ENCODE measurements at regions of chr9 and their contacts with region 1.

Region 1: GRCh38 chr9:97921959-97922724 is at the start of gene TRMO:
- DNase-seq: peak; percentile 93
- H3K4me3 ChIP-seq: peak within 1 kb of the TSS; percentile 72 to 74
- H3K27ac ChIP-seq: peak within 1 kb of the TSS; percentile 94 to 99
- H3K4me1 ChIP-seq: peaks cover 0 to 3% of the 10 kb centered on the region in 2 experiments; a peak in 3 of 4 replicates
- H3K27me3 ChIP-seq: no peaks in the 10 kb centered on the region
- CTCF ChIP-seq: peak; percentile 77
- EP300 ChIP-seq: peak in 1 of 2 experiments; percentile 24; a peak in 2 of 4 replicates
- RAD21 ChIP-seq: no peak; the same call in 1 of the 2 replicates
- polyA plus RNA-seq, gene TRMO: 8.1 and 11.8 TPM in 2 replicates

Region 2: GRCh38 chr9:97934321-97935115 is 12.4 kb after region 1 on chr9:
- CTCF ChIA-PET with region 1: interaction called, 19 read pairs
- POLR2A ChIA-PET with region 1: interaction called, 3 read pairs
- DNase-seq: no peak
- H3K4me3 ChIP-seq: no peak overlapping the region
- H3K27ac ChIP-seq: no peak overlapping the region
- H3K4me1 ChIP-seq: no peaks in the 10 kb centered on the region
- H3K27me3 ChIP-seq: peaks cover 24% of the 10 kb centered on the region; the same call in 1 of the 2 replicates
- CTCF ChIP-seq: no peak
- EP300 ChIP-seq: no peak
- RAD21 ChIP-seq: no peak

Region 3: GRCh38 chr9:97970165-97970564 is 48.0 kb after region 1 on chr9:
- CTCF ChIA-PET with region 1: interaction called, 16 read pairs
- POLR2A ChIA-PET with region 1: no interaction called
- DNase-seq: no peak
- H3K4me3 ChIP-seq: no peak overlapping the region
- H3K27ac ChIP-seq: no peak overlapping the region
- H3K4me1 ChIP-seq: no peaks in the 10 kb centered on the region
- H3K27me3 ChIP-seq: peaks cover 25% of the 10 kb centered on the region; the same call in 1 of the 2 replicates
- CTCF ChIP-seq: no peak
- EP300 ChIP-seq: no peak
- RAD21 ChIP-seq: no peak

Region 4: GRCh38 chr9:98022447-98022846 is 100.3 kb after region 1 on chr9:
- CTCF ChIA-PET with region 1: interaction called, 34 read pairs
- POLR2A ChIA-PET with region 1: interaction called, 4 read pairs
- DNase-seq: no peak
- H3K4me3 ChIP-seq: no peak overlapping the region
- H3K27ac ChIP-seq: 0 out of 4 replicates have a peak overlapping the region, but pooled peaks of 1 of the 2 experiments have one; percentile 20
- H3K4me1 ChIP-seq: peaks cover 0 to 16% of the 10 kb centered on the region in 2 experiments; a peak in 2 of 4 replicates
- H3K27me3 ChIP-seq: no peaks in the 10 kb centered on the region
- CTCF ChIP-seq: no peak
- EP300 ChIP-seq: no peak
- RAD21 ChIP-seq: no peak

Region 5: DNA sequence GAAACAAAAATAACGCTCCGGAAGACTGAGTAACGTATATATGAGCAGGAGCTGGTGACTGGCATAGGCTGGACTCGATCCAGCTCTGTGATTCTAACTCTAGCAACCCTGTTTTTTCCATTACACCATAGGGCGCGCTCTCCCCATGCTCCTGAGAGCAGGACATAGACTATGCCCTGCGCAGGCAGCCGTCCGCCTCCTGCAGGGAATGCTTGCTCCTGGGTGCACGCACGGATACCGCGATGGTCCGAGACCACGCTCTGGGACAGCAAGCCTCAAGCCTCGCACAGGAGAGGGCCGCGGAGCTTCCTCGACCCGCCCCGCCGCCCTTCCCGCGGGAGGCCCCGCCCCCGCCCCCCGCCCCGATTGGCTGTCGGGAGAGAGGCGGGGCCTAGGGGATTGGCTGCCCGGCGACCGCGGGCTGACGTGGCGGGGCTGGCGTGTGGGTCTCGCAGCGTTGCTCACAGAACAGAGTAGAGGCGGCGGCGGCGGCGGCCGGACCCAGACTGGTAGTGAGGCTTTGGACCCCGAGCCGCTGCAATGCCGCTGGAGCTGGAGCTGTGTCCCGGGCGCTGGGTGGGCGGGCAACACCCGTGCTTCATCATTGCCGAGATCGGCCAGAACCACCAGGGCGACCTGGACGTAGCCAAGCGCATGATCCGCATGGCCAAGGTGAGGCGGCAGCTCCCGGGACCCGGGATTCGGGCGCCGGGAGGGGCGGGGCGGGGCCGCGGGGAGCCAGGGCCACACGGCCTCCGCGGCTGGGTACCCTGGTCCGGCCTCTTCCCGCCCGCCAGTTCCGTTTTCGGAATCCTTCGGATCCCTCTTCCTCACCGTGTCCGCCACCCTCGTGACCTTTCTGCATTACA is 134.4 kb after region 1 on chr9 and contains the start of gene NANS:
- CTCF ChIA-PET with region 1: interaction called, 22 read pairs
- POLR2A ChIA-PET with region 1: interaction called, 11 read pairs
- DNase-seq: peak; percentile 98
- H3K4me3 ChIP-seq: peak within 1 kb of the TSS; percentile 67 to 96
- H3K27ac ChIP-seq: peak within 1 kb of the TSS; percentile 81 to 85
- H3K4me1 ChIP-seq: peaks cover 3 to 12% of the 10 kb centered on the region in 2 experiments; a peak in 2 of 4 replicates
- H3K27me3 ChIP-seq: no peaks in the 10 kb centered on the region
- CTCF ChIP-seq: peak; percentile 18; the same call in 1 of the 2 replicates
- EP300 ChIP-seq: peak in 1 of 2 experiments; percentile 41; a peak in 1 of 4 replicates
- RAD21 ChIP-seq: peak; percentile 33
- polyA plus RNA-seq, gene NANS: 53.5 and 61.3 TPM in 2 replicates

Region 6: GRCh38 chr9:98118640-98119601 is 196.8 kb after region 1 on chr9 and contains the start of gene TRIM14:
- CTCF ChIA-PET with region 1: no interaction called
- POLR2A ChIA-PET with region 1: no interaction called
- DNase-seq: peak; percentile 90
- H3K4me3 ChIP-seq: peak within 1 kb of the TSS; percentile 64 to 65
- H3K27ac ChIP-seq: peak within 1 kb of the TSS; percentile 21 to 30; a peak in 2 of 4 replicates
- H3K4me1 ChIP-seq: peaks cover 0 to 30% of the 10 kb centered on the region in 2 experiments; a peak in 3 of 4 replicates
- H3K27me3 ChIP-seq: no peaks in the 10 kb centered on the region
- CTCF ChIP-seq: peak; percentile 38
- EP300 ChIP-seq: no peak
- RAD21 ChIP-seq: peak; percentile 51
- polyA plus RNA-seq, gene TRIM14: 13.4 and 15.3 TPM in 2 replicates

Region 7: GRCh38 chr9:98185611-98186171 is 263.5 kb after region 1 on chr9:
- CTCF ChIA-PET with region 1: no interaction called
- POLR2A ChIA-PET with region 1: no interaction called
- DNase-seq: no peak
- H3K4me3 ChIP-seq: no peak overlapping the region
- H3K27ac ChIP-seq: no peak overlapping the region
- H3K4me1 ChIP-seq: peaks cover 0 to 4% of the 10 kb centered on the region in 2 experiments; a peak in 1 of 4 replicates
- H3K27me3 ChIP-seq: no peaks in the 10 kb centered on the region
- CTCF ChIP-seq: no peak
- EP300 ChIP-seq: no peak
- RAD21 ChIP-seq: no peak